OCI-LY7 (cell line): ENCODE measurements at regions of chr17 and their contacts with region 1.

Region 1: DNA sequence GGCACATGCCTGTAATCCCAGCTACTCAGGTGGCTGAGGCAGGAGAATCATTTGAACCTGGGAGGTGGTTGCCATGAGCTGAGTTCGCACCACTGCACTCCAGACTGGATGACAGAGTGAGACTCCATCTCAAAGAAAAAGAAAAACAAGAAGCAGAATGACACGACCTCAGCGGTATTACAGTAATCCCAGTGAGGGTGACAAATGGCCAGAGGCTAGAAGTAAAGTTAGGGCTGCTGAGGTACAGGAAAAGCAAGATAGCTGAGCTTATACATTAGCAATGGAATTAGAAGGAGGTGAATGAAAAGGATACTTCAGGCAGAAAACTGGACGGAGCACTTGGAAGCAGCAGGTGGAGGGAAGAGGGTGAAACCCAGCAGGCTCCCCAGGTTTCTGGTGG is 26.1 kb upstream of the AMZ2 start:
- DNase-seq: no peak
- H3K4me3 ChIP-seq: no peak overlapping the region
- H3K27ac ChIP-seq: peak overlapping the region; percentile 39
- H3K4me1 ChIP-seq: peaks cover 85% of the 10 kb centered on the region
- CTCF ChIP-seq: no peak

Region 2: GRCh38 chr17:67431249-67432048 is 790.3 kb before region 1 on chr17:
- CTCF ChIA-PET with region 1: no interaction called
- POLR2A ChIA-PET with region 1: no interaction called
- intact Hi-C with region 1: no loop called
- DNase-seq: no peak
- H3K4me3 ChIP-seq: no peak overlapping the region
- H3K27ac ChIP-seq: no peak overlapping the region
- H3K4me1 ChIP-seq: peaks cover 7% of the 10 kb centered on the region
- CTCF ChIP-seq: no peak

Region 3: DNA sequence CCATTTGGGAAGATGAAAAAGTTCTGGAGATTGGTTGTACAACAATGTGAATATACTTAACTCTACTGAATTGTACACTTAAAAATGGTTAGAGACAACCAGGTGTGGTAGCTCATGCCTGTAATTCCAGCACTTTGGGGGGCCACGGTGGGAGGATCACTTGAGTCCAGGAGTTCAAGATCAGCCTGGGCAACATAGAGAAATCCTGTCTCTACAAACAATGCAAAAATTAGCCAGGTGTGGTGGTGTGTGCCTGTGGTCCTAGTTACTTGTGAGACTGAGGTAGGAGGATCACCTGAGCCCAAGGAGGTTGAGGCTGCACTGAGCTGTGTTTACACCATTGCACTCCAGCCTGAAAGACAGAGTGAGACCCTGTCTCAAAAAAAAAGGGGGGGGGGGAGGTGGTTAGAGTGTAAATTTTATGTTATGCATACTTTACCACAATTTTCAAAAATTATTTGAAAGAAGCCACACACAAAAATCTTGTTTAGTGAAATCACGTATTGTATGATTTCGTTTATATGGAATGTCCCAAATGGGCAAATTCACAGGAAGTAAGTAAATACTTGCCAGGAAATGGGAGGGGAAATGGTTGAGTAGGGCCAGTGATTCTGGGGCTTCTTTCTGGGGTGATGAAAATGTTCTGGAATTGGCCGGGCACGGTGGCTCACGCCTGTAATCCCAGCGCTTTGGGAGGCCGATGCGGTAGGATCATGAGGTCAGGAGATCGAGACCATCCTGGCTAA is 11.0 kb before region 1 on chr17:
- CTCF ChIA-PET with region 1: no interaction called
- POLR2A ChIA-PET with region 1: interaction called, 37 read pairs
- intact Hi-C with region 1: no loop called
- DNase-seq: no peak
- H3K4me3 ChIP-seq: no peak overlapping the region
- H3K27ac ChIP-seq: peak overlapping the region; percentile 5
- H3K4me1 ChIP-seq: peaks cover 72% of the 10 kb centered on the region
- CTCF ChIP-seq: no peak

Region 4: DNA sequence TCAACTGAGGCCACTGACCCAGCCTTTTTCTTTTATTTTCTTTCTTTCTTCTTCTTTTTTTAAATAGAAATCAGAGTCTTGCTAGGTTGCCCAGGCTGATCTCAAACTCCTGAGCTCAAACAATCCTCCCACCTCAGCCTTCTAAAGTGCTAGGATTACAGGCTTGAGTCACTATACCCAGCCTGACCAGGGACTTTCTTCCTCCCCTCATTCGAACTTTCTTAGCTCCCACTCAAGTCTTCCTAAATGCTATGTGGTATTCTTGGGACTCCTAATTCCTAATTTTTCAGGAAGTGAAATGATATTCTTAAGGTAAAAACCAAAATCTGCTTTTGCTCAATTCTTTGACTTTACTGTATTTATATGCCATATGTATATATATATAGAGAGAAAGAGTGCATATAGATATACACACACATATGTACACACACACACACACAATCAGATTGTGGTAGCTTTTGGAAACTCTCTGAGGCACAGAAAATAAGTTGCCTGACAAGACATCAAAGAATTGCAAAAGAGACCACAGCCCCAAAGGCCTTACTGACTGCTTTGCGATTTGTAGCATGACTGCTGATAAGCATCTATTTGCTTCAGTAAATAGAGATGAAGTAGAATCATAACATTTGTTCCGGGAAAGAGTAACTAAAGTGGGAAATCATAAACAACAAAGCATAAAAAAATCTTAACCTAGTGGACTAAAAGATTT is 16.6 kb after region 1 on chr17:
- CTCF ChIA-PET with region 1: interaction called, 3 read pairs
- POLR2A ChIA-PET with region 1: interaction called, 154 read pairs
- intact Hi-C with region 1: loop called (anchors 1 kb)
- DNase-seq: no peak
- H3K4me3 ChIP-seq: peak overlapping the region; percentile 65
- H3K27ac ChIP-seq: peak overlapping the region; percentile 96
- H3K4me1 ChIP-seq: peaks cover 85% of the 10 kb centered on the region
- CTCF ChIP-seq: no peak